Activated CD4-positive, alpha-beta T cell treated with anti-CD3 and anti-CD28 coated beads for 36 hours (primary cell): ENCODE measurements at regions of chr3 and their contacts with region 1.

Region 1: DNA sequence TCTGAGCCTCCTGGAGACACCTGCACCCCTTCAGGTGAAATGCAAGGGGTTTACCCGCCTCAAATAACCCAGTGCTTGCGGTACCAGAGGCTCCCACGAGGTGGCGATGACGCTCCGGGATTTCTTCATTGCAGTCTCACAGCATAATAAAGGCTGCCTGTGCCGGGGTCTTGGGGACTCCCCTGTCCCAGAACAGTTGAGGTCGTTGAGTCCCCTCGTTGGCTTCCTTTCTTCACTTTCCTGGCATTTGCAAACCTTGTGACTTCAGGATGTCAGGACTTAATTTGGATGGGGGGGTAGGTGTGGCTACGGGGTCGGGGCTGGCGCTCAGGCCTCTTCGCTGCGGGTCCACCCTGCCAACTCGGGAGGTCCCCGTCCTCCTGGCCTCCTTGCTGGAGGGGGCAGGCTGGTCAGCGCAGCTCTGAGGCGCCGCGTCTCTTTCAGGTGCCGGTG is 1.3 kb downstream of the GNAT1 start:
- DNase-seq: peak; percentile 90
- ATAC-seq: peak; percentile 57
- H3K4me3 Mint-ChIP-seq: no peak overlapping the region
- H3K27ac Mint-ChIP-seq: no peak overlapping the region
- H3K4me1 Mint-ChIP-seq: peaks cover 13% of the 10 kb centered on the region
- H3K27me3 Mint-ChIP-seq: peaks cover 12% of the 10 kb centered on the region

Region 2: DNA sequence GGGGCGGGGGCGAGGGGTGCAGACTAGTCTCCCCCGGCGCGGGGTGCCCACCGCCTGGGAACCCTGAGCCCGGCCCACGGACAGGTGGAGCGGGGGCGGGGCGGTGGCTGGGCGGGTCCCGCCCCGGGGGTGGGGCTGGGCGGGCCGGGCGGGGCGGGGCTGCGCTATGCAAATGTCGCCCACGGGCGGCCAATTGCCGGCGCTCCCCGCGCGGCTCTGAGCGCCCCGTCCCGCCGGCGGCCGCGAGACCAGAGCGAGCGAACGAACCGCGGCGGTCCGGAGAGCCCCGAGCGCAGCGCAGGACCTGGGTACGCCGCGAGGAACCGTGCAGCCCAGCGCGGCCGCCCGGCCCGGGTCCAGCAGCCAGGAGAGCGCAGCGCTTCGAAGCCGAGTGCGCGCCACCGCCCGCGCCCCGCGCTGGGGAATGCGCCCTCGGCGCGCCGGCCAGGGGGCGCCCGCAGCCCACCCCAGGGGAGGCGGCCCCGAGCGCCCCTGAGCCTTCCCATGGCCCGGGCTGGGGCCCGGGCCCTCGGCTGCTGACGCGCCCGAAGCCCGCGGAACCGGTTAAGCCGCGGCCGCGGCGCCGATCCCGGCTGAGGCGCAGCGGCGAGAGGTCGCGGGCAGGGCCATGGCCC is 37.8 kb before region 1 on chr3 and contains the start of gene SEMA3F:
- CTCF ChIA-PET with region 1: interaction called, 3 read pairs
- POLR2A ChIA-PET with region 1: no interaction called
- intact Hi-C with region 1: loop called (anchors 1 to 2 kb)
- DNase-seq: peak; percentile 79
- ATAC-seq: peak; percentile 89
- H3K4me3 Mint-ChIP-seq: peak within 1 kb of the TSS; percentile 60
- H3K27ac Mint-ChIP-seq: no peak within 1 kb of the TSS
- H3K4me1 Mint-ChIP-seq: peaks cover 8% of the 10 kb centered on the region
- H3K27me3 Mint-ChIP-seq: peaks cover 29% of the 10 kb centered on the region
- total RNA-seq, gene SEMA3F: 0.25 to 0.46 TPM

Region 3: GRCh38 chr3:50227390-50228183 is 34.9 kb after region 1 on chr3:
- CTCF ChIA-PET with region 1: interaction called, 79 read pairs
- POLR2A ChIA-PET with region 1: no interaction called
- intact Hi-C with region 1: loop called (anchors 1 kb)
- DNase-seq: peak; percentile 95
- ATAC-seq: peak; percentile 83
- H3K4me3 Mint-ChIP-seq: peak overlapping the region; percentile 79
- H3K27ac Mint-ChIP-seq: peak overlapping the region; percentile 88
- H3K4me1 Mint-ChIP-seq: peaks cover 22% of the 10 kb centered on the region
- H3K27me3 Mint-ChIP-seq: no peaks in the 10 kb centered on the region

Region 4: DNA sequence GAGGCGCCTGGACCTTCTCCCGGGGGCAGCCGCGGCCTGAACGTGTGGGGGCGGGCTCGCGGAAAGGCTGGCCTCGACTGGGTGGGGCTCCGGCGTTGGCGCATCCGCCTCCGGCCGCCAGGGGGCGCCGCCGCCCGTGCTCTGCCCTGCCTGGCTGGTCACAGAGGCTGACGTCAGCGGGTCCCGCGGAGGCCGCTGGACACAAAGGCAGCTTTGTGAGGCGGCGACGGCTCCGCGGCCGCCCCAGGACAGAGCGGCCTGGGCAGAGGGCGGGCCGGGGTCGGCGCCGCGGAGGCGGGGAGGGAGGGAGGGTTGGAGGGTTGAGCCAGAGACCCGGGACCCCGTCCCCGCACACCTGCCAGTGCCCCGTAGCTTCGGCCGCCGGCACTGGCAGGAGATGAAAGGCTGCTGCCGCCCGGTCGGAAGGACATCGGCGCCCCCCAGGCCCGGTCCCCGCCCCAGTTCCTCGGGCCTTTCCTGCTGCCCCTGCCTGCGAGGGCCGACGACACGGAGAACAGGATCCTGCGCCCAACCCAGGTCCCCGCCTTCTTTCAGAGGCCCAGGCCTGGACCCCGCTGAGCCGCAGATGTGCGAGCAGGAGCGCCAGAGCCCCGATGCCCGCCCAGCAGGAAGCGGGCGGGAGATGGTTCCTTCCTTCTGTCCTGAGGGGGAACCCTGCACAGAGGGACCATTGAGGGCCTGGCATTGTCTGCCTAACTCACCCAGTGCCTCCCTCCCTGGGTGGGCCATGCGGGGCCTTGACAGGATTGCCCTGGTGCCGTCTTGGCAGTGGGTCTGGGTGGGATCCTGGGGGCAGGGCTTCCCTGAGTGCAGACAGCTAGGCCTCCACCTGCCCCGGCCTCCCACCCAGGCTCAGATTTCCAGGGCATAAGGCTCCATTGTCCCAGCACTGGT is 67.6 kb after region 1 on chr3:
- CTCF ChIA-PET with region 1: interaction called, 10 read pairs
- POLR2A ChIA-PET with region 1: no interaction called
- intact Hi-C with region 1: loop called in 1 of 2 experiments (anchors 1 kb)
- DNase-seq: peak; percentile 94
- ATAC-seq: peak; percentile 91
- H3K4me3 Mint-ChIP-seq: peak overlapping the region; percentile 61
- H3K27ac Mint-ChIP-seq: peak overlapping the region; percentile 65
- H3K4me1 Mint-ChIP-seq: peaks cover 4% of the 10 kb centered on the region
- H3K27me3 Mint-ChIP-seq: no peaks in the 10 kb centered on the region

Region 5: GRCh38 chr3:50321336-50322114 is 128.8 kb after region 1 on chr3:
- CTCF ChIA-PET with region 1: interaction called, 4 read pairs
- POLR2A ChIA-PET with region 1: no interaction called
- intact Hi-C with region 1: loop called in 1 of 2 experiments (anchors 2 kb)
- DNase-seq: peak; percentile 90
- ATAC-seq: peak; percentile 79
- H3K4me3 Mint-ChIP-seq: peak overlapping the region; percentile 84
- H3K27ac Mint-ChIP-seq: peak overlapping the region; percentile 85
- H3K4me1 Mint-ChIP-seq: peaks cover 38% of the 10 kb centered on the region
- H3K27me3 Mint-ChIP-seq: no peaks in the 10 kb centered on the region

Region 6: GRCh38 chr3:50388016-50388719 is 195.5 kb after region 1 on chr3:
- CTCF ChIA-PET with region 1: no interaction called
- POLR2A ChIA-PET with region 1: no interaction called
- intact Hi-C with region 1: no loop called
- DNase-seq: no peak
- ATAC-seq: no peak
- H3K4me3 Mint-ChIP-seq: no peak overlapping the region
- H3K27ac Mint-ChIP-seq: no peak overlapping the region
- H3K4me1 Mint-ChIP-seq: peaks cover 1% of the 10 kb centered on the region
- H3K27me3 Mint-ChIP-seq: no peaks in the 10 kb centered on the region